ENCODE measurements at regions of chr7 and their contacts with region 1.

Region 1: DNA sequence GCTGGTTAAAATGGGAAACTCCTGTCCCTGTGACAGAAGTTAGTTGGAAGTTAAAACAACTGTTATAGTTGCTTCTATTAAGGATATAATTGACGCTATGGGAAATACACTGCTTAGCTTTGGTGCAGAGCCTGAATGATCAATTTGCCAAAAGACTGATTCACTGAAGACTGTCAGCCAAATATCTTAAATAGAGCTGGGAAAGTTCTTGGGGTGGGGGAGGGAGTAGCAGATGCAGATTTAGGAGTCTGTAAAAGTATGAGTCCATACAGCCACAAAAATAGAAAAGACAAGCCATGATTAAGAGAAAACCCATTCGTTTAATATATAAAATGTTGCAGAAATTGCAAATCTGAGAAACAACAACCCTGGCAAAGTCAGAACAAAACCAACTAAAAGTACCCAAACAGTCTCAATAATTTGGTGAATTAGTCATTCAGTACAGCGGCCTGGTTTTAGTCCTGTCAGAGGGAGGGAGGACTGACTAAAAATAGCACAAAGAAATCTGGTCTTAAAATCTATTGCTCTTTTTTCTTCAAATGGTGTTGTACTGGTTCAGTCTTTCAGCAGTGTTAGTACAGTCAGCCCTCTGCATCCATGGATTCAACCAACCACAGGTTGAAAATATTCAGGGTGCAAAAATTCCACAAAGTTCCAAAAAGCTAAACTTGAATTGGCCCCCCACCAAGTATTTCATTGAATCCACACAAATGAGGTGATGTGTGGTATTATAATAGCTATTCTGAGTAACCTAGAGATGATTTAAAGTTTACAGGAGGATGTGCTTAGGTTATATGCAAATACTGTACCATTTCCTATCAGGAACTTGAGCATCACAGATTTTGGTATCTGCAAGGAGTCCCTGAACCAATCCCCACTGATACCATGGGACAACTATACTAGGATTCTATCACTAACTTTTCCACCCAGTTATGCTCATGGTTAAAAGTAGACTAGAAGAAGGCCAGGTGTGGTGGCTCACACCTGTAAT is 30.0 kb downstream of the STK17A start:
- DNase-seq: no peak
- H3K4me3 Mint-ChIP-seq: peak overlapping the region; percentile 1
- H3K27ac Mint-ChIP-seq: peak overlapping the region; percentile 70
- H3K4me1 Mint-ChIP-seq: peaks cover 31% of the 10 kb centered on the region
- H3K27me3 Mint-ChIP-seq: no peaks in the 10 kb centered on the region

Region 2: GRCh38 chr7:43590862-43591550 is 21.9 kb before region 1 on chr7:
- intact Hi-C with region 1: loop called (anchors 1 kb)
- DNase-seq: peak; percentile 24
- H3K4me3 Mint-ChIP-seq: no peak overlapping the region
- H3K27ac Mint-ChIP-seq: peak overlapping the region; percentile 23
- H3K4me1 Mint-ChIP-seq: peaks cover 75% of the 10 kb centered on the region
- H3K27me3 Mint-ChIP-seq: no peaks in the 10 kb centered on the region

Region 3: GRCh38 chr7:43625980-43626379 is 13.1 kb after region 1 on chr7:
- intact Hi-C with region 1: loop called (anchors 1 kb)
- DNase-seq: no peak
- H3K4me3 Mint-ChIP-seq: no peak overlapping the region
- H3K27ac Mint-ChIP-seq: peak overlapping the region; percentile 37
- H3K4me1 Mint-ChIP-seq: peaks cover 61% of the 10 kb centered on the region
- H3K27me3 Mint-ChIP-seq: no peaks in the 10 kb centered on the region